ENCODE measurements at regions of chr7 and their contacts with region 1.

Region 1: DNA sequence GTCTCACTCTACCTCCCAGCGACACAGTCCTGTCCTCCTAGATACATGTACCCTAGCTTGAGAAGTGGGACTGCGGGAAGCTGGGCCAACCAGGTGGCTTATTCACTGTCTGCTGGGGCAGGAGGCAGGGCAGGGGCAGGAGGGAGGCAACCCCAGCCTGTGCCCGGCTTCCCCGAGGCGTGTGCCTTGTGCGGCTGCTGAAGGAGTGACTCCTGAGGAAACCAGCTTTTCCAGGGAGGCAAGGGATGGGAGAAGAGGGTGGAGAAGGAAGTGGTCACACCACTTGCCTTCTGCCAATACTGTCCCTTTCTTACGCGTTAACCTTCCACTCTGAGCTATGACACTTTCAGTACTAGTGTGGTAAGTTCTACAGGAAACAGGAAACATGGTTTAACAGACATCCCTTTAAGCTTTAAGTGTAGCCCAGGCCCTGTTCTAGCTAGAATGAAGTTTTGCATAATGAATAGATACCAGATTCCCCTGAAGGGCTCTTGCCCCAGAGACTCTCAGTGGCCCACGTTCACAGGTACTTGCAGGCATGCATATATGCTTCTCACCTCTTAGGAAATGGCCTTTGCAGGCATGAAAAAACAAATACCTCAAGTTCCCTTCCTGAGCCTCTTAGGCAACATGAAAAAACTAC is 40.6 kb downstream of the SYPL1 start:
- DNase-seq: peak; percentile 57
- ATAC-seq: peak; percentile 87
- H3K4me3 Mint-ChIP-seq: peak overlapping the region; percentile 73
- H3K27ac Mint-ChIP-seq: peak overlapping the region; percentile 98
- H3K4me1 Mint-ChIP-seq: peaks cover 100% of the 10 kb centered on the region
- H3K27me3 Mint-ChIP-seq: no peaks in the 10 kb centered on the region
- CTCF ChIP-seq: no peak

Region 2: GRCh38 chr7:106089647-106090046 is 18.2 kb after region 1 on chr7:
- CTCF ChIA-PET with region 1: interaction called, 19 read pairs
- POLR2A ChIA-PET with region 1: interaction called, 199 read pairs
- intact Hi-C with region 1: loop called (anchors 1 kb)
- DNase-seq: no peak
- ATAC-seq: peak; percentile 88
- H3K4me3 Mint-ChIP-seq: peak overlapping the region; percentile 65
- H3K27ac Mint-ChIP-seq: peak overlapping the region; percentile 83
- H3K4me1 Mint-ChIP-seq: peaks cover 82% of the 10 kb centered on the region
- H3K27me3 Mint-ChIP-seq: no peaks in the 10 kb centered on the region
- CTCF ChIP-seq: no peak

Region 3: DNA sequence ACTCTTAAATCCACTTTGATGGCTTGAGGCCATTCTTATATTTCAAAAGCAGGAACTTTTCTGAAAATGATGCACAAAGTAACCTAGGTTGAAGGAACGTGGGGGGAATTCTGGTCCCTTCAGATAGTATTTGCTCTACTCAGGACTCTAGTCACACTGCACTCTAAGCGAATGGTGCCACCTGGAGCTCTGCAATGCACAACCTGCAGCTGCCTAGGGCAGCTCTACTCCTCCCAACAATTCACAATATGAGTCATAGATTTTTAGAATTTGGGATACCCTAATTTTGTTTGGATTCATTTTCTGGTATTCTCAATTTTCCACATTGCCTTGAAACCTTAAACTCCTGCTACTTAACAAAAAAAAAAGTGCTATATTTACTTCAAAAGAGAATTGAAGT is 23.3 kb after region 1 on chr7:
- CTCF ChIA-PET with region 1: interaction called, 19 read pairs
- POLR2A ChIA-PET with region 1: interaction called, 199 read pairs
- intact Hi-C with region 1: loop called (anchors 1 kb)
- DNase-seq: no peak
- ATAC-seq: peak; percentile 64
- H3K4me3 Mint-ChIP-seq: no peak overlapping the region
- H3K27ac Mint-ChIP-seq: peak overlapping the region; percentile 72
- H3K4me1 Mint-ChIP-seq: peaks cover 75% of the 10 kb centered on the region
- H3K27me3 Mint-ChIP-seq: no peaks in the 10 kb centered on the region
- CTCF ChIP-seq: no peak